Pancreas (tissue), 10 donors: ENCODE measurements at regions of chr11 and their contacts with region 1.

Region 1: GRCh38 chr11:3781423-3781822 is 15.9 kb downstream of the NUP98 start:
- DNase-seq: no peak
- ATAC-seq: peak in 3 of 4 donors; percentile 30 to 51 (median 40)
- H3K4me3 ChIP-seq: no peak overlapping the region
- H3K27ac ChIP-seq: peak overlapping the region in 2 of 4 donors; percentile 9 to 31
- H3K4me1 ChIP-seq: peaks cover 0 to 12% (median 10%) of the 10 kb centered on the region in 3 donors
- H3K27me3 ChIP-seq: no peaks in the 10 kb centered on the region
- CTCF ChIP-seq: no peak

Region 2: DNA sequence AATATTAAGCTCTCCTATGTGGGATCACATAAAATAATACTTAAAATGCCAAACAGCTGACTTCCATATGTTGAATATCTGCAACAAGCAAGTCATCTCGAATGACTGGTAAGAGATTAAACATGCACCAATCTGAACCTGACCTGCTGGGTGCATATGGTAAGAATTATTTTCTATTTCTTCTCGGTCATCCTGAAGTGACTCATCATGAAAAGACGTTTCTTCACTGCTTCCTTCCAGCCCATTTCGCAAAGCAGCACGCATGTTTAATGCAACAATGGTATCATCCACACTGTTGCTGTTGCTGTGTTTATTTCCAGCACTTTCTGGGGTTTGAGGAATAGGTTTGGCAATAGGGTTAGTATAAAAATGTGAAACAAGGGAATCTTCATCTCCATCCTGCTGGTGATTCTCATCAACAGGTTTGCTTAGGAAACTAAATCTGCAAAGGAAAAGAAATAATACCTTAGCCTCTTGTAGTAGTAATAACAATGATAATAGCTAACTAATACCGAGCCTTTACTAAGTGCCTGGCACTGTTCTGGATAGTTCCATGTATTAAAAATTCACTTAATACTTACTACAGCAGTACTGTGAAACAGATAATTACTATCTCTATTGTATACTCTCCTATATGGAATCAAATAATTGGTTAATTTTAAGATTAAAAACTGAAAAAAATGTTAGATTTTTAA is 58.3 kb before region 1 on chr11:
- intact Hi-C with region 1: loop called in 1 of 3 experiments (anchors 10 kb)
- DNase-seq: no peak
- ATAC-seq: peak in 2 of 4 donors; percentile 42 to 49
- H3K4me3 ChIP-seq: no peak overlapping the region
- H3K27ac ChIP-seq: no peak overlapping the region
- H3K4me1 ChIP-seq: no peaks in the 10 kb centered on the region
- H3K27me3 ChIP-seq: no peaks in the 10 kb centered on the region
- CTCF ChIP-seq: no peak